HEK293 (cell line): ENCODE measurements at regions of chr1 and their contacts with region 1.

Region 1: GRCh38 chr1:12107736-12108135 is 44.6 kb downstream of the TNFRSF8 start:
- H3K4me3 ChIP-seq: no peak overlapping the region
- H3K27ac ChIP-seq: no peak overlapping the region
- H3K4me1 ChIP-seq: no peaks in the 10 kb centered on the region
- CTCF ChIP-seq: no peak

Region 2: DNA sequence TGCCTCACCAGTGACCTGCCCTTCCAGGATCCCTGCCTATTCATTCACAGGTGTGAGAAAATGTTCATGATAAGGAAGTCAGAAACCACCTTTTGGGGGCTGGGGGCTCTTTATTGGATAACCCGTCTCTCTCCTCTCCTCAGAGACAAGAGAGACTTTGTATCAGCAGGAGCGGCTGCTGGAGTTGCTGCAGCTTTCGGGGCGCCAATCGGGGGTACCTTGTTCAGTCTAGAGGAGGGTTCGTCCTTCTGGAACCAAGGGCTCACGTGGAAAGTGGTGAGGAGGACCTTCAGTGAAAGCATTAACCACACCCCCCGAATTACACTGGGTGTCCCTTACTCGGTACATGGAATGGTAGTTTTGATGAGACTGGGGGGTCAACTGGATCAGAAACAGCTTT is 280.8 kb before region 1 on chr1:
- CTCF ChIA-PET with region 1: no interaction called
- POLR2A ChIA-PET with region 1: interaction called, 10 read pairs
- H3K4me3 ChIP-seq: no peak overlapping the region
- H3K27ac ChIP-seq: no peak overlapping the region
- H3K4me1 ChIP-seq: no peaks in the 10 kb centered on the region
- CTCF ChIP-seq: no peak

Region 3: DNA sequence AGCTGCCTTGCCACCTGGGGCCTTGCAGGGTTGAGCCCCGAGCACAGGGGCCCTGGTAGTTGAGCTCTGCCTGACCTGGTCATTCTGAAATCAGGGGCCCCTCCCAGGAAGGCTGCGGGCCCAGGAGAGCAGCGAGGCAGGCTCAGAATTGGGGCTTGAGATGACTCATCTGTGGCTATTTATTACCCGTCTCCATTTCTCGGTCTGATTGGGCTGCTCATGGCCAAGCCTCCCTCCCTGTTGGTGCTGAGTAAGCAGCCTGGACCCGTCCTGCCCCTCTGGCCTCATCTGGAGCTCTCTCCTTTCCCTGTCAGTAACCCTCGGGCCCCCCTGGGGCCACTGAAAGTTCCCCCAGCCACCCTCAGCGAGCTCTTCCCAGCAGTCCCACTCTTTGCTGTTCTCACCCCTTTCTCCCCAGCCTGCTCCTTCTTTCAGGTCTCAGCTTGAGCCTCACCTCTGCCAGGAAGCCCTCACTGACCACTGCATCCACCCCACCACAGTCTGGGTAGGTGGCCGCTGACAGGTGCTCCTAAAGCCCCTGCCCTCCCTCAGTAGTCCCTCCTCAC is 55.6 kb before region 1 on chr1:
- CTCF ChIA-PET with region 1: no interaction called
- POLR2A ChIA-PET with region 1: no interaction called
- H3K4me3 ChIP-seq: no peak overlapping the region
- H3K27ac ChIP-seq: no peak overlapping the region
- H3K4me1 ChIP-seq: no peaks in the 10 kb centered on the region
- CTCF ChIP-seq: no peak

Region 4: GRCh38 chr1:12405325-12406210 is 297.8 kb after region 1 on chr1:
- CTCF ChIA-PET with region 1: no interaction called
- POLR2A ChIA-PET with region 1: no interaction called
- H3K4me3 ChIP-seq: no peak overlapping the region
- H3K27ac ChIP-seq: no peak overlapping the region
- H3K4me1 ChIP-seq: no peaks in the 10 kb centered on the region
- CTCF ChIP-seq: no peak; the same call in 1 of the 2 replicates